Mammary epithelial cell (primary cell): ENCODE measurements at regions of chr1 and their contacts with region 1.

Region 1: DNA sequence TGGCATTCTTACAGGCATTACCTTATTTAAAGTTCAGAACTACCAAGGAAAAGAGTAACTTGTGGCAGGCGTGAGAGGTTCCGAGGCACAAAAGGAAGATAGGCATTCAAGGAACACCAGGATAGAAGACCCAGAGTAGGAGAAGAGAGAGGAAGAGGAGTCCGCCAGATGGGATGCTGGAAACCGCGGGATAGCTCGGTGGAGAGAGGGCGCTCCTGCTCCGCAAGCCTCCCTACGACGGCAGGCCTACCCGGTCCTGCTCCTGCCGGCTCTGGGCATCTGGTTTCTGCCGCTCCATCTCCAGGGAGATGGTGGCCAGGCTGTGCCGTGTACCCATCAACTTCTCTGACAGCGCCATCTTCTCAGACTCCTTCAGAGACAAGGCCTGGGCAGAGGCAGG is 5.4 kb upstream of the NBPF1 start:
- DNase-seq: no peak
- H3K4me3 ChIP-seq: no peak overlapping the region
- H3K27ac ChIP-seq: no peak overlapping the region
- H3K4me1 ChIP-seq: peaks cover 26% of the 10 kb centered on the region
- H3K27me3 ChIP-seq: no peaks in the 10 kb centered on the region
- CTCF ChIP-seq: no peak

Region 2: GRCh38 chr1:16521288-16521583 is 97.5 kb before region 1 on chr1:
- CTCF ChIA-PET with region 1: no interaction called
- dilution Hi-C with region 1: loop called (anchors 5 kb)
- in situ Hi-C with region 1: no loop called
- intact Hi-C with region 1: no loop called
- DNase-seq: no peak
- H3K4me3 ChIP-seq: no peak overlapping the region
- H3K27ac ChIP-seq: no peak overlapping the region
- H3K4me1 ChIP-seq: no peaks in the 10 kb centered on the region
- H3K27me3 ChIP-seq: peaks cover 2% of the 10 kb centered on the region
- CTCF ChIP-seq: no peak

Region 3: GRCh38 chr1:16904560-16905111 is 285.9 kb after region 1 on chr1:
- CTCF ChIA-PET with region 1: no interaction called
- dilution Hi-C with region 1: no loop called
- in situ Hi-C with region 1: no loop called
- intact Hi-C with region 1: loop called (anchors 1 kb)
- DNase-seq: peak; percentile 97
- H3K4me3 ChIP-seq: peak overlapping the region; percentile 52 to 69 (median 54)
- H3K27ac ChIP-seq: peak overlapping the region; percentile 100
- H3K4me1 ChIP-seq: peaks cover 19% of the 10 kb centered on the region
- H3K27me3 ChIP-seq: no peaks in the 10 kb centered on the region
- CTCF ChIP-seq: no peak